ENCODE measurements at regions of chrX and their contacts with region 1.

Region 1: DNA sequence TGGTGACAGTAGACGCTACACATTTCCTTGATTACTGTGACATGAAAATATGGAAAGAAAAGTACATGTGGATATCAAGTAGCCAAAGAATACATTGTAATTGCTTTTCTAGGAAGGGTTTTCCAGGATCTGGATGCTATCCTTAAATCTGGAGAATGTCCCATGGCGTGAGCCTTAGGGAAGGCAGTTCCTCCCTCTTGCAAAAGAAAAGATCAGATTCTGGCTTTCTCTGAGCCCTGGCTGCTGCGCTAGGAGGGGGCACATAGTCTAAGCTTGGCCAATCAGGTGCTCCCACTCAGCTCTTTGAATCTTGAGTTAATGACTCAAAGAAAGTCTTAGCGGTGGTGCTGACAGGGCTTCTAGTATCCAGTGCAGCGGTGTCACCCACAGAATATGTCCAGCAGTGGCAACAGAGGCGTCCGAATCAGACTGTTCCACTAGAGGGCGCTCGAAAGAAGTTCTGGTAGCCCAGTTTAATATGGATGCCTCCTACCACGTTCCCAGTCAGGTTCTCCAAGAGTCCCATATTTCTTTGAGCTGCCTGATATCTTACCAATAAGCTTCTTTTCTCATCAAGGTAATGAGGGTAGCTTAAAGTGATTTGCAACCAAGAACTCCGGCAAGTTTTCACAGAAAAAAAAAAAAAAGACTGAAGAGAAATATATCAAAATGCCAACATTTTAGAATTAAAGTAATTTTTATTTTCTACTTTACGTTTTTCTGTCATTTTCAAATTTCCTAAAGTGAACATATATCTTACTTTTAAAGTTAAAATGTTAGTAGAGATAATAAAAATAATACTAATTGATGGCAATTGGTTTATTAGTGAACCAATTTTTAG is 213.4 kb upstream of the S100G start:
- DNase-seq: peak; percentile 79
- H3K4me3 ChIP-seq: no peak overlapping the region
- H3K27ac ChIP-seq: no peak overlapping the region
- H3K4me1 ChIP-seq: no peaks in the 10 kb centered on the region
- H3K27me3 ChIP-seq: no peaks in the 10 kb centered on the region
- CTCF ChIP-seq: peak in 4 of 5 experiments; percentile 29 to 55 (median 50)
- EP300 ChIP-seq: no peak
- POLR2A ChIP-seq: no peak

Region 2: GRCh38 chrX:15815779-15816437 is 620.7 kb before region 1 on chrX:
- in situ Hi-C with region 1: loop called in 1 of 4 experiments (anchors 25 kb)
- intact Hi-C with region 1: no loop called
- DNase-seq: peak; percentile 12
- H3K4me3 ChIP-seq: no peak overlapping the region
- H3K27ac ChIP-seq: no peak overlapping the region
- H3K4me1 ChIP-seq: no peaks in the 10 kb centered on the region
- H3K27me3 ChIP-seq: no peaks in the 10 kb centered on the region
- CTCF ChIP-seq: peak in 2 of 5 experiments; percentile 18 to 21
- EP300 ChIP-seq: no peak
- POLR2A ChIP-seq: no peak

Region 3: GRCh38 chrX:16670998-16671397 is 234.4 kb after region 1 on chrX:
- in situ Hi-C with region 1: loop called (anchors 25 kb)
- intact Hi-C with region 1: no loop called
- DNase-seq: no peak
- H3K4me3 ChIP-seq: no peak overlapping the region
- H3K27ac ChIP-seq: no peak overlapping the region
- H3K4me1 ChIP-seq: no peaks in the 10 kb centered on the region
- H3K27me3 ChIP-seq: no peaks in the 10 kb centered on the region
- CTCF ChIP-seq: peak in 3 of 5 experiments; percentile 10 to 17 (median 11)
- EP300 ChIP-seq: no peak
- POLR2A ChIP-seq: no peak

Region 4: DNA sequence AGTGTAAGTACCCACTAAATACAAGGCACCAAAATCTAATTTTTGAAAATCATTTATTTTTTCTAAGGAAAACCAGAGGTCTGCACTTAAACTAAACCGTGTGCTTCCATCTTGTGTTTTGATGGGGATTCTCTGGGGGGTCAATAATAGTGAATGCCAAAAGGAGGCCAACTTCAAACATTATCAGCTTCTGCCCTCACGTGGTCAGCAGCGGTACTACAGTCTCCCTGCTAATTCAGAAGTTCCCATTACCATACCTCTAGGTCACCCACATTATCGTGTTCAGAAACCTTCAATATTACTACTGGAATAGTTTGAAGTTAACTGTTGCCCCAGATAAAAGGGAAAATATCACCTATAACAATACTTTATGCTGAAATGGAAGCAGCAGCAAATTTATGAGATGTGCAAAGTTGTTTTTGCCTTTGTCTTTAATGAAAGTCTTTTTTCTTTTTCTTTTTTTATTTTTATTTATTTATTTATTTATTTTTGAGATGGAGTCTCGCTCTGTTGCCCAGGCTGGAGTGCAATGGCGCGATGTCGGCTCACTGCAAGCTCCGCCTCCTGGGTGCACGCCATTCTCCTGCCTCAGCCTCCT is 258.6 kb after region 1 on chrX:
- in situ Hi-C with region 1: loop called in 2 of 4 experiments (anchors 25 kb)
- intact Hi-C with region 1: no loop called
- DNase-seq: peak; percentile 65
- H3K4me3 ChIP-seq: no peak overlapping the region
- H3K27ac ChIP-seq: no peak overlapping the region
- H3K4me1 ChIP-seq: no peaks in the 10 kb centered on the region
- H3K27me3 ChIP-seq: no peaks in the 10 kb centered on the region
- CTCF ChIP-seq: peak; percentile 66 to 90 (median 72)
- EP300 ChIP-seq: no peak
- POLR2A ChIP-seq: no peak